ENCODE measurements at regions of chr2 and their contacts with region 1.

Region 1: GRCh38 chr2:68832233-68832869 is 38.8 kb downstream of the BMP10 start:
- DNase-seq: no peak
- H3K4me3 Mint-ChIP-seq: peak overlapping the region; percentile 62
- H3K27ac Mint-ChIP-seq: peak overlapping the region; percentile 88
- H3K4me1 Mint-ChIP-seq: peaks cover 86% of the 10 kb centered on the region
- H3K27me3 Mint-ChIP-seq: no peaks in the 10 kb centered on the region

Region 2: DNA sequence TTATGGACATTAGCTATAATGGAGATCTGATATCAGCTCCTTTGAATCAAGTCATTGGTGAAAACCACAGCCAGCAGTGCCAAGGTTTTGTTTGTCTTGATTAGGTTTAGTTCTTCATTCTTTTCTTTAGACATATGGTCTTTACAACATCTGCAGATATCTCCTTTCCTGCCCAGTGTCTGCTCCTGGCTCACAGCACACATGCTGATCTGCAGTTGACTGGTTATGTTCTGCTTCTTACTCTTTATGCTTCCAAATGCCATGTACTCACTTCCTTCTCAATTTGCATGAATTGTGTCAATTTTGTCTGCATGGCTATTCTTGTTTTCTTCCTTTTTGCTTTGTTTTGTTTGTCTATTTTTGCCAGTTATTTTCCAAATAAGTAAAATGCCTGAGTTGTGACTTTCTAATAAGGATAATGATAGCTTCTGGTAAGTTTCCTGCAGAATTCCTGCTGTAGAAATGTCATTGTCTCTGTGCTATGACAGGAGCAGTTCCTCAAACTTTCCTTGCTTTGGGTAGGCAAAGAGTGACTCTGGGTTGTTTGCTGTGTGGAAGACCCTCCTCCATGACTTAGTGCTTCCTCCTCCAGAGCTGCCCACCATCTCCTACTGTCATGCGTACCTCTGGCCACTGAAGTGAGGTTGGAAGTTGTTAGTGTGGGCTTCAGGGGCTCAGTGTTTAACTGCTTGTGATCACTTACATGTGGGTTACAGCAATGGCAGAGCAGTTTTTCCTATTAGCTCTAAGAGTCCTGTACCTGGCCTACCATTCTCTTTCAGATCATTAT is 89.5 kb before region 1 on chr2:
- intact Hi-C with region 1: loop called (anchors 1 kb)
- DNase-seq: no peak
- H3K4me3 Mint-ChIP-seq: peak overlapping the region; percentile 53
- H3K27ac Mint-ChIP-seq: peak overlapping the region; percentile 55
- H3K4me1 Mint-ChIP-seq: peaks cover 92% of the 10 kb centered on the region
- H3K27me3 Mint-ChIP-seq: no peaks in the 10 kb centered on the region

Region 3: DNA sequence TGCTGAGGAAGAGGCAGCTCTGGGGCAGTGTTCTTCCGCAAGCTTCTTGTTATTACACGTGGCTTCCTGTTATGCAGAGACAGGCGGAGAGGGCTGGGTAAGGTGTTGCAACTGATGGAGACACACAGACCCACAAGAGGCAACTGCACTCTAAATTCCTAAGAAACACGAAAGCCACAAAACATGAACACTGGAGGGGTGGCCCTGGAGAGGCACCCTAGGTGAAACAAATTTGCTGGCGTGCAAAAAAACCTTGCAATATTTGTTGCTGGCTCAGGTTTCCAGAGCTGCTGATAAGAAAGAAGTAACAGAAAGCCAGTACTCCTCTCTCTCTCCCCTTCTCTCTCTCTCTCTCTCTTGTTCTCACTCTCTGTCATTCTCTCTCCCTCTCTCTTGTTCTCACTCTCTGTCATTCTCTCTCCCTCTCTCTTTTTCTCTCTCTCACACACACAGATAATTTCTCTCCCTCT is 65.9 kb before region 1 on chr2:
- intact Hi-C with region 1: loop called (anchors 1 kb)
- DNase-seq: peak; percentile 75
- H3K4me3 Mint-ChIP-seq: peak overlapping the region; percentile 65
- H3K27ac Mint-ChIP-seq: peak overlapping the region; percentile 92
- H3K4me1 Mint-ChIP-seq: peaks cover 96% of the 10 kb centered on the region
- H3K27me3 Mint-ChIP-seq: no peaks in the 10 kb centered on the region

Region 4: DNA sequence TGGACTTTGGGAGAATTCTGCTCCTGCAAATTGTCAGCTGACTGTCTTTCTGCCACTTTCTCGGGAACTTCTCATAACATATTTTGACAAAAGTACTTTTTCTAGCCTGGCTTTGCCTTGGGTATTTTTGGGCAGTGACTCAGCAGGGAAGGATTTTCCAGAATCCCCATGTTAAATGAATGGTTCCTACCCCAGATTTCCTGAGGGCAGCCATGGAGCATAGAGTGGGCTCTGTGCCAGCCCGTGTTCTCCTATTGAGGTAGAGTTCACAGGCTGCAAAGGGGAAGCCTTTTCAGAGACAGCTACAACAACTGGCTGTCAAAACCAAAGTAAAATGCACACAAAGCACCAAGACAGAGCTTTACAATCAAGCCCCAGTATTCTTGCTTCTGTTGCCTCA is 21.0 kb before region 1 on chr2:
- intact Hi-C with region 1: loop called (anchors 2 kb)
- DNase-seq: no peak
- H3K4me3 Mint-ChIP-seq: no peak overlapping the region
- H3K27ac Mint-ChIP-seq: peak overlapping the region; percentile 29
- H3K4me1 Mint-ChIP-seq: peaks cover 28% of the 10 kb centered on the region
- H3K27me3 Mint-ChIP-seq: no peaks in the 10 kb centered on the region

Region 5: GRCh38 chr2:68909793-68910674 is 77.7 kb after region 1 on chr2:
- intact Hi-C with region 1: no loop called
- DNase-seq: peak; percentile 56
- H3K4me3 Mint-ChIP-seq: peak overlapping the region; percentile 12
- H3K27ac Mint-ChIP-seq: peak overlapping the region; percentile 70
- H3K4me1 Mint-ChIP-seq: peaks cover 33% of the 10 kb centered on the region
- H3K27me3 Mint-ChIP-seq: no peaks in the 10 kb centered on the region

Region 6: GRCh38 chr2:69122271-69122670 is 289.9 kb after region 1 on chr2:
- intact Hi-C with region 1: no loop called
- DNase-seq: no peak
- H3K4me3 Mint-ChIP-seq: no peak overlapping the region
- H3K27ac Mint-ChIP-seq: no peak overlapping the region
- H3K4me1 Mint-ChIP-seq: no peaks in the 10 kb centered on the region
- H3K27me3 Mint-ChIP-seq: peaks cover 6% of the 10 kb centered on the region